ENCODE measurements at regions of chr19 and their contacts with region 1.

Region 1: GRCh38 chr19:2151339-2152229 is at the start of gene AP3D1:
- DNase-seq: peak; percentile 100
- ATAC-seq: peak; percentile 92 to 94
- H3K4me3 ChIP-seq: peak within 1 kb of the TSS; percentile 83 to 100 (median 92)
- H3K27ac ChIP-seq: peak within 1 kb of the TSS; percentile 92 to 97 (median 96)
- H3K4me1 ChIP-seq: peaks cover 26 to 34% of the 10 kb centered on the region in 2 donors
- H3K27me3 ChIP-seq: no peaks in the 10 kb centered on the region
- CTCF ChIP-seq: no peak
- POLR2A ChIP-seq: peak; percentile 62 to 86
- total RNA-seq, gene AP3D1: 71.0 to 139 (median 99.0) TPM

Region 2: GRCh38 chr19:2096480-2097329 is 54.9 kb before region 1 on chr19 and contains the start of gene IZUMO4:
- in situ Hi-C with region 1: no loop called
- intact Hi-C with region 1: loop called (anchors 2 kb)
- DNase-seq: peak; percentile 97 to 98
- ATAC-seq: peak; percentile 86 to 87
- H3K4me3 ChIP-seq: peak within 1 kb of the TSS; percentile 82 to 91 (median 87)
- H3K27ac ChIP-seq: peak within 1 kb of the TSS; percentile 86 to 99 (median 92)
- H3K4me1 ChIP-seq: peaks cover 38 to 39% of the 10 kb centered on the region in 2 donors
- H3K27me3 ChIP-seq: no peaks in the 10 kb centered on the region
- CTCF ChIP-seq: peak; percentile 13 to 56 (median 28)
- POLR2A ChIP-seq: peak; percentile 37 to 40
- total RNA-seq, gene IZUMO4: 0.93 to 1.4 TPM in 2 of 4 donors, not detected in the others

Region 3: GRCh38 chr19:2221918-2222317 is 70.3 kb after region 1 on chr19:
- in situ Hi-C with region 1: loop called in 1 of 4 experiments (anchors 5 kb)
- intact Hi-C with region 1: no loop called
- DNase-seq: no peak
- ATAC-seq: no peak
- H3K4me3 ChIP-seq: no peak overlapping the region
- H3K27ac ChIP-seq: no peak overlapping the region
- H3K4me1 ChIP-seq: no peaks in the 10 kb centered on the region
- H3K27me3 ChIP-seq: no peaks in the 10 kb centered on the region
- CTCF ChIP-seq: peak in 4 of 5 experiments; percentile 12 to 33 (median 14)
- POLR2A ChIP-seq: no peak

Region 4: DNA sequence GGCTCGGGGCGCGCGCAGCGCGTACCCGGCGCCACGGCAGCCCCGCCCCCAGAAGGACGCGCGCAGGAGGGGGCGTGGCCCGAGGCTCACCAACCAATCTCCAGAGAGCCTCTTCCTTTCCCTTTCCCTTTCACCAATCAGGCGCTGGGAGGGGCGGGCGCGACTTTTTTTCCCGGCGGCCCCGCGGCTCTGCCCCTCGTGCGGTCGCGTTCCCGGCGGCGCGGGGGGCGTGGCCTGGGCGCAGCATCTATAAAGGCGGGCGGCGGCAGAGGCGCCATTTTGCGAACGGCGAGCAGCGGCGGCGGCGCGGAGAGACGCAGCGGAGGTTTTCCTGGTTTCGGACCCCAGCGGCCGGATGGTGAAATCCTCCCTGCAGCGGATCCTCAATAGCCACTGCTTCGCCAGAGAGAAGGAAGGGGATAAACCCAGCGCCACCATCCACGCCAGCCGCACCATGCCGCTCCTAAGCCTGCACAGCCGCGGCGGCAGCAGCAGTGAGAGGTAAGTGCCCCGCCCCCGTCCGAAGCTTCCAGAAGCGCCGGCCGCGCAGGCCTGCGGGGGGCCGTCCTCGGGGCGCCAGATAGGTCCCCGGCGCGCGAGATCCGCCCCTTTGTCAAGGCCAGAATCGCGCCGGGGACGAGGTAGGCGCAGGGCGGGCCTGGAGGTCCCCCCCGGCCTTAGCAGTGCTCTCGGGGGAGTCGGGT is 117.8 kb after region 1 on chr19:
- in situ Hi-C with region 1: no loop called
- intact Hi-C with region 1: loop called (anchors 1 kb)
- DNase-seq: peak; percentile 97 to 99
- ATAC-seq: peak; percentile 82 to 89
- H3K4me3 ChIP-seq: peak overlapping the region; percentile 88 to 100 (median 98)
- H3K27ac ChIP-seq: peak overlapping the region; percentile 99 to 100 (median 100)
- H3K4me1 ChIP-seq: peaks cover 35 to 40% of the 10 kb centered on the region in 2 donors
- H3K27me3 ChIP-seq: no peaks in the 10 kb centered on the region
- CTCF ChIP-seq: peak in 4 of 5 experiments; percentile 26 to 66 (median 52)
- POLR2A ChIP-seq: peak; percentile 100

Region 5: DNA sequence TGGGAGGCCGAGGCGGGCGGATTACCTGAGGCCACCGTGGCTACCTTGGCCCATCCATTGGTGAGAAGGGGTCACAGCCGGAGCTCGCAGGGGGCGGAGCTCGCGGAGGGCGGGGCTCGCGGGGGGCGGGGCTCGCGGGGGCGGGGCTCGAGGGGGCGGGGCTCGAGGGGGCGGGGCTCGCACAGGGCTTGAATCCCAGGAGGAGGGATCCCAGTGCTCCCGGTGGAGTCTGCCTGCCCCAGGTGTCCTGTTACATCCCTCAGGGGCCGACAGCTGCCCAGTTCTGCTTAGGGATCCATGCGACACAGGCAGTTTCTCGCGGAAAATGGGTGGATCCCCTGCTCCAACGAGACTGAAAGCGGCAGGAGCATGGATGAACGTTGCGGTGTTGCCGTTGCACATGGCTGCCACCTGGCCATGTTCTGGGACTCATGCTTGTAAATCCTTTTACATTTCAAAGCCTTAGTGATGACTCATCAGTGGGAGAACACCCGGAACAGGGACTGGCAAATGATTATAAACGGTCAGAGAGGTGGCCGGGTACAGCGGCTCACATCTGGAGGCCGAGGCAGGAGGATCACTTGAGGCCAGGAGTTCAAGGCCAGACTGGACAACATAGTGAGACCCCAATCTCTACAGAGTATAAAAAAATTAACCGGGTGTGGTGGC is 233.6 kb after region 1 on chr19:
- in situ Hi-C with region 1: loop called in 2 of 4 experiments (anchors 10 kb)
- intact Hi-C with region 1: loop called (anchors 5 kb)
- DNase-seq: peak in 1 of 2 donors; percentile 83
- ATAC-seq: peak; percentile 65 to 94
- H3K4me3 ChIP-seq: peak overlapping the region in 1 of 4 donors; percentile 21
- H3K27ac ChIP-seq: peak overlapping the region in 1 of 4 donors; percentile 43
- H3K4me1 ChIP-seq: no peaks in the 10 kb centered on the region
- H3K27me3 ChIP-seq: peaks cover 0 to 3% (median 0%) of the 10 kb centered on the region in 3 donors
- CTCF ChIP-seq: no peak
- POLR2A ChIP-seq: no peak

Region 6: DNA sequence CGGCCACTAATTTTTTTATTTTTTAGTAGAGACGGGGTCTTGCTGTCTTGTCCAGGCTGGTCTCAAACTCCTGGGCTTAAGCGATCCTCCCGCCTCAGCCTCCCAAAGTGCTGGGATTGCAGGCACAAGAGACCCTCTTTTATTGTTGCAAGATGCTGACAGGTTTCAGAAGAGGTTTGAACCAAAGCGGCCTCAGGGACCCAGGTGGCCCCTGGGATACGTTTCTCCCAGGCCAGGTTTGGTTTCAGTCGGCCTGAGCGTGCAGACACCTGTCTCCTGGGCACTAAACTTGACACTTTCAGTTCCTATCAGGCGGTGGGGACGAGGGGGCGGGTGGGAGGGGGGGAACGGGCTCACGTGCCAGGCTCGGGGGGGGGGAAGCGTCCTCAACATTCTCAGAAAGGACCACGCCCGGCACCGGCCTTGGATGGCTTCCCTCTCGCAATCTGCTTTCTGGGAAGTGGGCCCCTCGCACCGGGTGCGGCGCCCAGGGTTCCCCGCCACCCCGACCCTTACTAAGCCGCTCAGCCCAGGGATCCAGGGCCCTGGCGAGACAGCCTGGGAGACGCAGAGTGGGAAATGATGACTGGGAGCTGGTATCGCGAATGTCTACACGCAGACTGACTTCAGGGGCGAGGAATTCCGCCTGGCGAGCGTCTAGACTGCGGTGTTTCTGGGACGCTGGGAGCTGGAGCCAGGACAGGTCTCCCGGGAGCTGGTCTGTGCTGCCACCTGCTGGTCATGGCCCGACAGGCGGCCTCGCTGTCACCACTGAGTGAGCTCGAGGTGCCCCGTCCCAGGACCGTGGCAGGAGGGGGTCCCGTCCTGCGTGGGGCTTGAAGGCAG is 459.3 kb after region 1 on chr19:
- in situ Hi-C with region 1: no loop called
- intact Hi-C with region 1: loop called (anchors 5 kb)
- DNase-seq: peak; percentile 80 to 83
- ATAC-seq: peak; percentile 95 to 96
- H3K4me3 ChIP-seq: peak overlapping the region; percentile 52 to 88 (median 64)
- H3K27ac ChIP-seq: peak overlapping the region; percentile 72 to 84 (median 84)
- H3K4me1 ChIP-seq: no peaks in the 10 kb centered on the region
- H3K27me3 ChIP-seq: no peaks in the 10 kb centered on the region
- CTCF ChIP-seq: peak; percentile 94 to 99 (median 99)
- POLR2A ChIP-seq: peak in 1 of 2 donors; percentile 13